CD8-positive, alpha-beta T cell (primary cell): ENCODE measurements at regions of chr19 and their contacts with region 1.

Region 1: GRCh38 chr19:9768175-9769112 is at the start of gene ZNF846:
- DNase-seq: peak; percentile 83 to 96 (median 93)
- ATAC-seq: peak; percentile 95
- H3K4me3 ChIP-seq: peak within 1 kb of the TSS; percentile 94 to 96
- H3K4me3 Mint-ChIP-seq: peak within 1 kb of the TSS; percentile 97
- H3K27ac ChIP-seq: peak within 1 kb of the TSS; percentile 87 to 99
- H3K27ac Mint-ChIP-seq: peak within 1 kb of the TSS; percentile 99
- H3K4me1 ChIP-seq: peaks cover 8% of the 10 kb centered on the region
- H3K4me1 Mint-ChIP-seq: peaks cover 16% of the 10 kb centered on the region
- H3K27me3 ChIP-seq: no peaks in the 10 kb centered on the region
- H3K27me3 Mint-ChIP-seq: no peaks in the 10 kb centered on the region
- CTCF ChIP-seq: no peak
- total RNA-seq, gene ZNF846: 6.4 to 8.2 TPM

Region 2: DNA sequence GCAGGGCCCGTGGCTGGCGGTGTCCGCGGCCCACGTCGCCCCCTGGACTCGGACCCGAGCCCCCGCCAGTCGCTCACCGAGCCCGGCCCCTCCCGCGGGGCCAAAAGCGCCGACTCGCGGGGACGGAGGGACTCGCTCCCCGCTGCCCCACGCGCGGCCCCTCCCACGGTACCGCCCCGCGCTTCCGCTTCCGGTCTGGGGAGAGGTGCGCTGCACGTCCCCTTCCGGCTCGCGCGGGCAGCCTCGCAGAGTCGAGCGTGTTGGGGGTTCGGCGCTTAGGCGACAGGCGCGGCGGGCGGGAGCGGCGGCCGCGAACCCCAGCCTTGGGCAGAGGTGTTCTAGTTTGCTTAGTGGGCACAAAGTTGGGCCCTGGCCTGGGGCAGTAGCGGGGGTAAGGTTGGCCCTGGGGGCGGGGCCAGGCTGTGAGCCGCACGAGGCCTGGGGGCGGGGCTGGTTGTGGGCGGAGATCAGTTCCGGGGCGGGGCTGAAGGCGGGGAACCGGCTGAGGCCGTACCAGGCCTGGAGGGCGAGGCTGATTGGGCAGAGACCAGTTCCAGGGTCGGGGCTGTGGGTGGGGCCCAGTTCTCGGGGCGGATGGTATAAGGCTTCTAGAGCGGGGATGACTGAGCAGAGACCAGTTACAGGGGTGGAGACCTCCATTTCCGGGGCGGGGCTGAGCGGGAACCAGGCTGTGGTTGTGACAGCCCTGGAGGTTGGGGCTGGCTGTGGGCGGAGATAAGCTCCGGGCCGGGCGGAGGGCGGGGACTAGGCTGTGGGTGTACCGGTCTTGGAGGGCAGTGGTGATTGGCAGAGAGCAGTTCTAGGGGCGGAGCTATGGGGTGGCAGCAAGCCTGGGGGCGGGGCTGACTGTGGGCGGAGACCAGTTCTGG is 936.1 kb before region 1 on chr19 and contains the starts of genes MBD3L1 and ZNF558:
- CTCF ChIA-PET with region 1: no interaction called
- POLR2A ChIA-PET with region 1: no interaction called
- intact Hi-C with region 1: loop called in 1 of 2 experiments (anchors 10 kb)
- DNase-seq: peak; percentile 97 to 100 (median 99)
- ATAC-seq: peak; percentile 89
- H3K4me3 ChIP-seq: peak within 1 kb of the TSS; percentile 86 to 93
- H3K4me3 Mint-ChIP-seq: peak within 1 kb of the TSS; percentile 92
- H3K27ac ChIP-seq: peak within 1 kb of the TSS; percentile 91
- H3K27ac Mint-ChIP-seq: peak within 1 kb of the TSS; percentile 96
- H3K4me1 ChIP-seq: peaks cover 13% of the 10 kb centered on the region
- H3K4me1 Mint-ChIP-seq: peaks cover 27% of the 10 kb centered on the region
- H3K27me3 ChIP-seq: no peaks in the 10 kb centered on the region
- H3K27me3 Mint-ChIP-seq: no peaks in the 10 kb centered on the region
- CTCF ChIP-seq: no peak
- total RNA-seq, gene MBD3L1: not detected
- total RNA-seq, gene ZNF558: 28.1 to 32.9 TPM

Region 3: GRCh38 chr19:9674663-9675357 is 93.6 kb before region 1 on chr19 and contains the start of gene ZNF562:
- CTCF ChIA-PET with region 1: no interaction called
- POLR2A ChIA-PET with region 1: interaction called, 3 read pairs
- intact Hi-C with region 1: loop called (anchors 1 kb)
- DNase-seq: peak; percentile 60 to 89 (median 81)
- ATAC-seq: peak; percentile 81
- H3K4me3 ChIP-seq: peak within 1 kb of the TSS; percentile 65 to 90
- H3K4me3 Mint-ChIP-seq: peak within 1 kb of the TSS; percentile 97
- H3K27ac ChIP-seq: peak within 1 kb of the TSS; percentile 80 to 84
- H3K27ac Mint-ChIP-seq: peak within 1 kb of the TSS; percentile 99
- H3K4me1 ChIP-seq: no peaks in the 10 kb centered on the region
- H3K4me1 Mint-ChIP-seq: peaks cover 23% of the 10 kb centered on the region
- H3K27me3 ChIP-seq: no peaks in the 10 kb centered on the region
- H3K27me3 Mint-ChIP-seq: no peaks in the 10 kb centered on the region
- CTCF ChIP-seq: no peak
- total RNA-seq, gene ZNF562: 13.6 to 16.5 TPM

Region 4: GRCh38 chr19:9785367-9786331 is 17.2 kb after region 1 on chr19:
- CTCF ChIA-PET with region 1: interaction called, 6 read pairs
- POLR2A ChIA-PET with region 1: interaction called, 6 read pairs
- intact Hi-C with region 1: loop called (anchors 1 kb)
- DNase-seq: peak; percentile 90 to 98 (median 97)
- ATAC-seq: peak; percentile 82
- H3K4me3 ChIP-seq: peak overlapping the region; percentile 95 to 97
- H3K4me3 Mint-ChIP-seq: peak overlapping the region; percentile 88
- H3K27ac ChIP-seq: peak overlapping the region; percentile 87 to 98
- H3K27ac Mint-ChIP-seq: peak overlapping the region; percentile 95
- H3K4me1 ChIP-seq: peaks cover 10% of the 10 kb centered on the region
- H3K4me1 Mint-ChIP-seq: peaks cover 29% of the 10 kb centered on the region
- H3K27me3 ChIP-seq: no peaks in the 10 kb centered on the region
- H3K27me3 Mint-ChIP-seq: no peaks in the 10 kb centered on the region
- CTCF ChIP-seq: no peak